Activated B cell treated with CpG ODN at 0.5 μM for 24 hours (primary cell): ENCODE measurements at regions of chr7 and their contacts with region 1.

Region 1: DNA sequence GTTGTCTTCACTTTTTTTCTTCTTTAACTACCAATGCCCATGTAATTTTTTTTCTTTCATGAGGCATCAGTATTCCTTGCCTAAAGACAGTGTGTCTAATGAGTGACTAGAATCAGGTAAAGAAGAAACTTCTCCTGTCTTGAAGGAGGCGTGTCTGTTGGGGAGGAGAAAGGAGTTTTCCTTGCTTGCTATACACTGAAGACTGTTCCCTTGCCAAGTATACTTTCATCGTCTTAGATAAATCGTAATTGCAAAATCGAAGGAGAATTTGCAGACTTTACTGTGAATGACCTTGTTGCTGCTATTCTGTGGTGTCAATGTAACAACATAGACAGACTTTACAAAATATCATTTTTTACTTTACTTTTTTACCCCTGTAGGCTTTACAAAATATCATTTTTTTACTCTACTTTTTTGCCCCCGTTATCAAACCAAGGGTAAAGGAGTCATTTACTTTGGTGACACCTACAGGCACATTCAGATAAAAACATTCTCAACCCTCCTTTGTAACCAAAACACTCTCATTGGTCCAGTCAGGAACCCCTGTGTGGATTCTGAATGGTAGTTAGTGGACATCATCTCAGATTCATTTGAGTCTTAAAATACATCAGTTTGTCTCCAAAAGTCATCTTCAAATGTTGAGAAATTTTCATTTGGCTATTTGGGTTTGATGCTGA is 232.4 kb downstream of the AHR start:
- DNase-seq: no peak
- ATAC-seq: no peak
- H3K4me3 Mint-ChIP-seq: no peak overlapping the region
- H3K27ac Mint-ChIP-seq: no peak overlapping the region
- H3K4me1 Mint-ChIP-seq: no peaks in the 10 kb centered on the region
- H3K27me3 Mint-ChIP-seq: no peaks in the 10 kb centered on the region
- CTCF ChIP-seq: no peak

Region 2: GRCh38 chr7:16695621-16696237 is 835.1 kb before region 1 on chr7:
- CTCF ChIA-PET with region 1: no interaction called
- POLR2A ChIA-PET with region 1: no interaction called
- intact Hi-C with region 1: loop called (anchors 1 kb)
- DNase-seq: no peak
- ATAC-seq: peak; percentile 49
- H3K4me3 Mint-ChIP-seq: no peak overlapping the region
- H3K27ac Mint-ChIP-seq: no peak overlapping the region
- H3K4me1 Mint-ChIP-seq: no peaks in the 10 kb centered on the region
- H3K27me3 Mint-ChIP-seq: no peaks in the 10 kb centered on the region
- CTCF ChIP-seq: no peak

Region 3: DNA sequence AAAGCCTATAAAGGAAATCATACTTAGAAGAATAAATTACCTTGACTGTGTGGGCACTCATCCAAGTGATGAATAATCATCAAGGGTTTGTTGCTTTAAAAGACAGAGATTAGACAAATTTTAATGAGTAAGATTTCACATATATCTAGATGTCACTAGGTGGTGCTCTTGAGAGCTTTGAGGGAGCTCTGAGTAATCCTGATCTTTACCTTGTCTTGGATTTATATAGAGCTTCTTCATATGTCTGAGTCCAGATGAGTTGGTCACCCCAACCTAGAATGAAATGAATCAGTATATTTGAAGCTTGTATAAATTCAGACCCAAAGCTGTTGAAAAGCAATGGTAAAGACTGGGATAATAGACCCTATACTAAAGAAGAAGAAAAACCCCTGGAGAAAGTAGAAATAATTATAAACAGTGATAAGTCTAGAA is 729.8 kb before region 1 on chr7:
- CTCF ChIA-PET with region 1: interaction called, 3 read pairs
- POLR2A ChIA-PET with region 1: no interaction called
- intact Hi-C with region 1: loop called (anchors 1 kb)
- DNase-seq: no peak
- ATAC-seq: peak; percentile 56
- H3K4me3 Mint-ChIP-seq: no peak overlapping the region
- H3K27ac Mint-ChIP-seq: no peak overlapping the region
- H3K4me1 Mint-ChIP-seq: peaks cover 4% of the 10 kb centered on the region
- H3K27me3 Mint-ChIP-seq: no peaks in the 10 kb centered on the region
- CTCF ChIP-seq: no peak

Region 4: DNA sequence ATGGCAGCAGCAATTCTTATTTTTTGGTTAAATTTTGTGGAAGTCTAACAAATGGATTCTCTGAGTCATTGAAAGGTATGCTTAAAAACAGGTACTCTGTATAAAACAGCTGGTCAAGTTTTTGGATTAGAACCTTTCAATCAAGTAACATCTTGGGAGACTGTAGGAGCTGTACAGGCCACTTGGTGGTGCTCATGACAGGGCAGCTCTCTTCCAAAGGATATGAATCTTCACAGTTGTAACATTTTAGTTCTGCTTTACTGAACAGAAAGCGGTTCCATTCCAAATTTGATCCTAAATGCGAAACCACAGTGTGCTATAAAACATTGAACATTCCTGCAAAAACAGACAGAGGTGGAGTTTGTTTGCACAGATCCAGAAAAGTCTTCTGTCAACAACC is 604.6 kb before region 1 on chr7:
- CTCF ChIA-PET with region 1: no interaction called
- POLR2A ChIA-PET with region 1: no interaction called
- intact Hi-C with region 1: loop called (anchors 2 kb)
- DNase-seq: no peak
- ATAC-seq: peak; percentile 45
- H3K4me3 Mint-ChIP-seq: no peak overlapping the region
- H3K27ac Mint-ChIP-seq: no peak overlapping the region
- H3K4me1 Mint-ChIP-seq: peaks cover 41% of the 10 kb centered on the region
- H3K27me3 Mint-ChIP-seq: peaks cover 11% of the 10 kb centered on the region
- CTCF ChIP-seq: no peak

Region 5: DNA sequence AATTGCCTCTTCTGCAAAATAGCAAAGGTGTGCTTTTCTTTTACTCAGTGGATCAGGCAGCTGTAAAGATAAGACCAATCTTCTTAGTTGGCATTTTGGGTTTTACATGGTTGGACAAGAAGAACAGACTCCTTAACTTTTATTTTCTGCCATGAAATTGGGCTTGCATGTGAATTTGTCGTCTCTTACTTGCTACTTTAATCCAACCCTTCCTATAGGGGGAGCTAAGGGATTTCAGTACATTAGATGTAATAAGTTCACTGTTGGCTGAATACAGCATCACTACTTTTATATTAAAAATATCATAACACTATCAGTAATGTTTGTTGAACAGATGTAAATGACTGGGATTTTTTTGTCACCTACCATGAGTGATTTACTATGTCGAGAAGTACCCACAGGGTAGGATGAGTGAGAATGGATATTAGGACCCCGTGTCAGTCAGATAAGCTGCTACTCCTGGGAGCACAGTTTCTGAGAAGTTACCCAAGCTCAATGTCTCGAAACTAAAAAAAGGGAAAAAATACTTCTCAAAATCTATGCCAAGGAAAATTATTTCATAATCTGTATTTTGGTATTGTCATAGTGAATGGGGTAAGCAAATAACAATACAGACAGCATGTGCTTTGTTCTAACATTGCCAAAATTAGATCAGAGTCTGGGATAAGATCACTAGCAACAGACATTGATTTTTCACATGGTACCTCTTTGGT is 521.7 kb before region 1 on chr7:
- CTCF ChIA-PET with region 1: interaction called, 3 read pairs
- POLR2A ChIA-PET with region 1: no interaction called
- intact Hi-C with region 1: loop called (anchors 1 kb)
- DNase-seq: no peak
- ATAC-seq: no peak
- H3K4me3 Mint-ChIP-seq: no peak overlapping the region
- H3K27ac Mint-ChIP-seq: no peak overlapping the region
- H3K4me1 Mint-ChIP-seq: peaks cover 6% of the 10 kb centered on the region
- H3K27me3 Mint-ChIP-seq: peaks cover 3% of the 10 kb centered on the region
- CTCF ChIP-seq: peak; percentile 29

Region 6: GRCh38 chr7:17063045-17063383 is 467.9 kb before region 1 on chr7:
- CTCF ChIA-PET with region 1: no interaction called
- POLR2A ChIA-PET with region 1: no interaction called
- intact Hi-C with region 1: loop called (anchors 5 kb)
- DNase-seq: no peak
- ATAC-seq: no peak
- H3K4me3 Mint-ChIP-seq: no peak overlapping the region
- H3K27ac Mint-ChIP-seq: no peak overlapping the region
- H3K4me1 Mint-ChIP-seq: peaks cover 14% of the 10 kb centered on the region
- H3K27me3 Mint-ChIP-seq: no peaks in the 10 kb centered on the region
- CTCF ChIP-seq: no peak